Activated T-helper 1 cell treated with anti-CD3 and anti-CD28 coated beads, Interleukin-12 subunit alpha, Interleukin-12 subunit beta, Interleukin-2, Interleukin-4 antibody, amounts not matched to agents 30 ng/mL and 10 ng/mL and 1 ng/mL, durations not matched to agents 14 hours and 24 hours and 36 hours (primary cell): ENCODE measurements at regions of chr6 and their contacts with region 1.

Region 1: GRCh38 chr6:33200219-33201146 is at the starts of genes RXRB and SLC39A7:
- DNase-seq: peak; percentile 97
- H3K4me3 Mint-ChIP-seq: peak within 1 kb of the TSS; percentile 100
- H3K27ac Mint-ChIP-seq: peak within 1 kb of the TSS; percentile 97
- H3K4me1 Mint-ChIP-seq: peaks cover 75% of the 10 kb centered on the region
- H3K27me3 Mint-ChIP-seq: no peaks in the 10 kb centered on the region
- total RNA-seq, gene RXRB: 46.6 and 47.4 TPM in 2 replicates
- total RNA-seq, gene SLC39A7: 67.1 and 68.8 TPM in 2 replicates

Region 2: DNA sequence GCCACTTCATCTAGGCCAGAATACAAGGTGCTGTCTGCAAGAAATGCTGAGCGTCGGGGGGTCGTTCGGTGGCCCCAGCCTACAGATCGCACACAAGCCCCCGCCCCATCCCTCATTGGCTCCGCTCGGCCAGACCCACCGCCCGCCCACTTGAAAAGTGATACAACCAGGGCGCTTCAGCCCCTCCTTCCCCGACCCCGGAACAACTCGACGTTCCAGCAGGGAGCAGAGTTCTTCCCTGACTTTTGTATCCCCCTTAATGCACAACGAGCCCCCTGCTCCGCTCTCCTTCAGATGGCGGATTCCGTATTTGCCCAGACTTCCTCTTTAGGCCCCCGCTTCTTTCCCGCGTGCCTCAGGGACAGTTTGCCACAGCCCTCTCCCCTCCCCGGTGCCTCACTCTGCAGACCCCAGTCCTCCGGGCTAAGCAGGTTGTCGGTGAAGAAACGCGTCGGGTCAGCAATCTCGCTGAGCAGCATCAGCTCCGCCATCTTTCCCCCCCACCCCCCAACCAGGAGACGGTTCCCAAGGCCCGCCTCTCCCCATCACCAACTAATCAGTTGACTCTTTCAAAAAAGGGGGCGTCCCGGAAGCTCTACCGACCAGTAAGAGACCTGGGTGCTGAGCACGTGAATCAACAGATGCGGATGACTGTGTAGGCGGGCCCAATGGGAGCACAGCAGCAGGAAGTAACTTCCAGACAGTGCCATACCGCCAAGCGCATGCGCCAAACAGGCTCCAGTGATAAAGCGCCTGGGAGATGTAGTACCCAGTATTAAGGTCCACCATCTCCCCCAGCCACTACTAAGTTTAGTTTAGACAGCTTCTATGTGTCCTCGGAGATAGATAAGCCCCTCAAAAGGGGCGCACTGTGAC is 1072.5 kb before region 1 on chr6 and contains the start of gene ATF6B:
- intact Hi-C with region 1: loop called (anchors 1 kb)
- DNase-seq: peak; percentile 95
- H3K4me3 Mint-ChIP-seq: peak within 1 kb of the TSS; percentile 99
- H3K27ac Mint-ChIP-seq: peak within 1 kb of the TSS; percentile 94
- H3K4me1 Mint-ChIP-seq: peaks cover 45% of the 10 kb centered on the region
- H3K27me3 Mint-ChIP-seq: peaks cover 2% of the 10 kb centered on the region
- total RNA-seq, gene ATF6B: 80.1 and 97.6 TPM in 2 replicates

Region 3: DNA sequence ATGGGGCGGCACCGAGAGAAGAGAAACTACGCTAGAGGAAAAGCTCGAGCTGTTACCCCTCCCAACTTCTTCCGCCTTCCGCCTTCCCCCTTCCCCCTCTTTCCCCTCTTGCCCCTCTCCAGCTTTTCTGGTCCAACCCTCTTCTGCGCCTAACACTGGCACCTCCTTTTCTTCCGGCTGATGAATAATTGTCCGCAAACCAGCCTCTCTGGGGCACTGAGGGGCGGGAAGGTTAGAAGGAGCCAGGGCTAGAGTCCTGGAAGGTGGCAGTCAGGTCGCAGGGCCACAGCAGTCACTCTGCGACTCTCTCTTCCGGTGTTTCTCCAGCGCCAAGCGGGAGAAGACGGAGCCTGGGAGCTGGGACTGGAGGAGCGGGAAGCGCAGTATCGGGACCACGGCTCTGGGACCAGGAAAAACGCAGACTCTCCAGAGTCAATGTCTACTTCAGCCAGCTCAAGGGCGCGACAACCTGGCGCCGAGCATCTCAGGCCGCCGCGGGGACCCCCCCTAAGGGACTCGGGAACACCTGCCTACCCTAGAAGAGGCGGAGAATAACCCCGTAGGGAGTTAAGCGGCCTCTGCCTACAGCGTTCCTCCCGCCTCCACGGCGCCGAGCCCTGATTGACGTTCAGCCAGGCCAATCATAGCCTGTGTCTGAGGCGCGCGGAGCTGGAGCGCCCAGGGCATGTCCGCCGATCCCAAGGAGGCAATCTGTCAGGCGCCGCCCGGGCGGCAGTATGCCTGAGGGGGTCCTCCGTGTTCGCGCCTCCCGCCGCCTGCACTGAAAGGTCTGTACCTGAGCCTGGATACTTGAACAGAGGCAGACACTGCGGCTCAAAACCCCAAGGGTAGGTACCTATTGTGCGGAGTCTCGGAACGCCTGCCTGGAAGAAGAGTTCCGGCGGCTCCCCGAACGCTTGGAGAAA is 306.1 kb before region 1 on chr6:
- intact Hi-C with region 1: loop called (anchors 2 kb)
- DNase-seq: peak; percentile 95
- H3K4me3 Mint-ChIP-seq: peak overlapping the region; percentile 99
- H3K27ac Mint-ChIP-seq: peak overlapping the region; percentile 92
- H3K4me1 Mint-ChIP-seq: peaks cover 48% of the 10 kb centered on the region
- H3K27me3 Mint-ChIP-seq: peaks cover 12% of the 10 kb centered on the region

Region 4: GRCh38 chr6:33161354-33162331 is 38.8 kb before region 1 on chr6:
- intact Hi-C with region 1: loop called (anchors 1 kb)
- DNase-seq: peak; percentile 78
- H3K4me3 Mint-ChIP-seq: peak overlapping the region; percentile 80
- H3K27ac Mint-ChIP-seq: peak overlapping the region; percentile 65
- H3K4me1 Mint-ChIP-seq: peaks cover 10% of the 10 kb centered on the region
- H3K27me3 Mint-ChIP-seq: peaks cover 4% of the 10 kb centered on the region

Region 5: GRCh38 chr6:33299237-33299944 is 98.9 kb after region 1 on chr6:
- intact Hi-C with region 1: loop called (anchors 1 kb)
- DNase-seq: peak; percentile 92
- H3K4me3 Mint-ChIP-seq: peak overlapping the region; percentile 95
- H3K27ac Mint-ChIP-seq: peak overlapping the region; percentile 99
- H3K4me1 Mint-ChIP-seq: peaks cover 38% of the 10 kb centered on the region
- H3K27me3 Mint-ChIP-seq: no peaks in the 10 kb centered on the region

Region 6: DNA sequence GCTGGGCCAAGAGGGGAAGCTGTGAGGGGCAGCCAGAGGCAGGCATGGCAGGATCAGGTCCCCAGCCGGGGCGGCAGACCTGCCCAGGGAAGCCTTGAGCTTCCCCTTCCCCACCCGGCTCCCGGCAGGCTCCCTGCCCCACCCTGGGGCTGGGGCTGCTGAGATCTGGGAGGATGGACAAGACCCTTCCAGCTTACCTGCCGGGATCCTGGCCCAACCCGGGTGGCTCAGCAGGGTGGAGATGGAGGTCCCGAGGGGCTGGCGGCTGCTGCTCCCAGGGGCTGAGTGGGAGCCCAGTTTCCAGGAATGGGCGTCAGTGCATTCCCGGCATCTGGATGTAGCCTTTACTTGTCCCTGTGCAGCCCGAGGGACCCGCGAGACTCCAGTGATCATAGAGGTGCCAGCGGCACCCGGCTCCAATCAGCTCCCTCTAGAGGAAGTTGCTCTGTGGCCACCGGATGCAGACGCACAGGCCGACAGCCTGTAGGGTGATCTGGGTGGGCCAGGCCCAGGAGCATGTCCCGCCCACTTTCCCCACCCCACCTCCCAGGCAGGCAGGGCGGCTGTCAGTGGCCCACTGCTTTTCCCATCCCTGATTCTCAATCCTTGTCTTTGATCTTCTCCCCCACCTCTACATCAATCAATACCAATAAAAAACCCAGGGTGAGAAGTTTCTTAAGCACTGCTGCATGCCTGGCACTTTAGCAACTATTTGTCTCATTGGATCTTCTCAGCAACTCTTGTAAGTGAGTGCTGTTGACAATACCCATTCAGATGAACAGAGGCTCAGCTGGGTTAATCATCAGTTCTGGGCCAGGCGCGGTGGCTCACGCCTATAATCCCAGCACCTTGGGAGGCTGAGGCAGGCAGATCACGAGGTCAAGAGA is 379.6 kb after region 1 on chr6 and contains the start of gene BAK1:
- intact Hi-C with region 1: loop called (anchors 10 kb)
- DNase-seq: peak; percentile 81
- H3K4me3 Mint-ChIP-seq: peak within 1 kb of the TSS; percentile 90
- H3K27ac Mint-ChIP-seq: peak within 1 kb of the TSS; percentile 90
- H3K4me1 Mint-ChIP-seq: peaks cover 43% of the 10 kb centered on the region
- H3K27me3 Mint-ChIP-seq: no peaks in the 10 kb centered on the region
- total RNA-seq, gene BAK1: 67.0 and 67.9 TPM in 2 replicates